ENCODE measurements at regions of chr22 and their contacts with region 1.

Region 1: GRCh38 chr22:46576556-46577367 is 39.3 kb upstream of the CELSR1 start:
- DNase-seq: no peak
- H3K4me3 ChIP-seq: peak overlapping the region; percentile 63 to 65
- H3K27ac ChIP-seq: peak overlapping the region; percentile 70
- H3K4me1 ChIP-seq: peaks cover 55% of the 10 kb centered on the region
- H3K27me3 ChIP-seq: no peaks in the 10 kb centered on the region
- CTCF ChIP-seq: no peak
- POLR2A ChIP-seq: no peak

Region 2: GRCh38 chr22:46522797-46523196 is 54.0 kb before region 1 on chr22:
- intact Hi-C with region 1: no loop called
- DNase-seq: no peak
- H3K4me3 ChIP-seq: no peak overlapping the region
- H3K27ac ChIP-seq: no peak overlapping the region
- H3K4me1 ChIP-seq: peaks cover 20% of the 10 kb centered on the region
- H3K27me3 ChIP-seq: no peaks in the 10 kb centered on the region
- CTCF ChIP-seq: no peak
- POLR2A ChIP-seq: no peak

Region 3: DNA sequence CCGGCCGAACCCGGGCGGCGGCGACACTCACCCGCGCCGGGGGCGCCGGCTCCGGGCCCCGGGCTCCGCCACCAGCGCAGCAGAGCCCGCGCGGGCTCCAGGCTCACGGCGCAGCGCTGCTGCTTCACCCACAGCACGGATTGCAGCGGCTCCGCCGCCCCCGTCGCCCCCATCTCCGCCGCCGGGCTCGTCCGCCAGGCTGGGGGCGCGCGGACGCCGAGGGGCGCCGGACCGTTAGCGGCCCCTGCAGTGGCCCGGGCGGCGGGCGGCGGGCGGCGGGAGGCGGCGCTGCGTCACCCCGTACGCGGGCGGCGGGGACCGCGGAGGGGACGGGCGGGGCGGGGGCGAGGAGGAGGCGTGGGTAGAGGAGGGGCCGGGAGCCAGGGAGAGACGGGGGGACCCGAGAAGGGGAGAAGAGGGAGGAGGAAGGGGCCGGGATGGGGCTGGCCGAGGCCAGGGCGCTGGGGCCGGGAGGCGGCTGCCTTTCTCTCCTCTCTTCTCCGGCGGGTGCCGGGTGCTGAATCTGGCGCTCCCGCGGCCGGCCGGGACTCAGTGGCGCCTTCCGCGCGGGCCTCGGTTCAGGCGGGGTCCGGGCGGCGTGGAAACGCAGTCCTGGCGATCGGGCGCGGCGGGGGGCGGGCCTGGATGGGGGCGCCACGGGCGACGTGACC is 161.3 kb after region 1 on chr22 and contains the start of gene CERK:
- intact Hi-C with region 1: loop called (anchors 5 kb)
- DNase-seq: no peak
- H3K4me3 ChIP-seq: peak within 1 kb of the TSS; percentile 73 to 91
- H3K27ac ChIP-seq: peak within 1 kb of the TSS; percentile 88
- H3K4me1 ChIP-seq: peaks cover 63% of the 10 kb centered on the region
- H3K27me3 ChIP-seq: no peaks in the 10 kb centered on the region
- CTCF ChIP-seq: no peak
- POLR2A ChIP-seq: peak in 1 of 2 donors; percentile 47
- total RNA-seq, gene CERK: 37.3 TPM